ENCODE measurements at regions of chr6 and their contacts with region 1.

Region 1: DNA sequence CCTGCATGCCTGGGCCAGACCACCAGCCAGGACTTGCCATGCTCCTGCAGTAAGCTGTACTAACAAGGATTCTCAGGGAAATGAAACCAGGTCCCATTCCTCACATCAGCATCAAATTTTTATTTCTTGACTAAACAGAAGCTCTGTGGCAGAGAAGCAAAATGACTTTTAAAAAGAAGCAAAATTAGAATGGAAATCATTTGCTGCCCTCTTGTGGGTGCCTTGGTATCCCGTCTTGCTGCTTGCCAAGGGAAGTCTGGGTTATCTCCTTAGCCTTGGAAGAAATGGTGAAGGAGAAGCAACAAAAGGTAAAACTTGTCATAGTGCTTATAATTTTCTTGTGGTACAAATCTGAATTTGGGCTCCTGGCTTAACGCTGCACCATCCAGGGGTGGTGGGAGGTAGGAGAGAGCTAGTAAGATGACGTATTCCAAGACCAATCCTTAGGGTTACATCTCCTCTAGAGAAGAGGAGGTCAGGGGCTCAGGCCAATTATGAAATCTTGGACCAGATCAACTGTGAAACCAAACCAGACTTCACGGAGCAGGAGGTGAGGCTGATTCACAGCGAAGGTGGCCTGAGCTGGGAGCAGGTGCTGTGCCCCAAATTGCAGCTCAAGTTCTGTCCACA is 107.5 kb downstream of the FAXC start:
- DNase-seq: no peak
- ATAC-seq: no peak
- H3K4me3 ChIP-seq: no peak overlapping the region
- H3K27ac ChIP-seq: no peak overlapping the region
- H3K4me1 ChIP-seq: no peaks in the 10 kb centered on the region
- H3K27me3 ChIP-seq: peaks cover 0 to 5% (median 0%) of the 10 kb centered on the region in 9 donors
- CTCF ChIP-seq: peak in 10 of 12 donors; percentile 22 to 52 (median 42)
- POLR2A ChIP-seq: no peak

Region 2: DNA sequence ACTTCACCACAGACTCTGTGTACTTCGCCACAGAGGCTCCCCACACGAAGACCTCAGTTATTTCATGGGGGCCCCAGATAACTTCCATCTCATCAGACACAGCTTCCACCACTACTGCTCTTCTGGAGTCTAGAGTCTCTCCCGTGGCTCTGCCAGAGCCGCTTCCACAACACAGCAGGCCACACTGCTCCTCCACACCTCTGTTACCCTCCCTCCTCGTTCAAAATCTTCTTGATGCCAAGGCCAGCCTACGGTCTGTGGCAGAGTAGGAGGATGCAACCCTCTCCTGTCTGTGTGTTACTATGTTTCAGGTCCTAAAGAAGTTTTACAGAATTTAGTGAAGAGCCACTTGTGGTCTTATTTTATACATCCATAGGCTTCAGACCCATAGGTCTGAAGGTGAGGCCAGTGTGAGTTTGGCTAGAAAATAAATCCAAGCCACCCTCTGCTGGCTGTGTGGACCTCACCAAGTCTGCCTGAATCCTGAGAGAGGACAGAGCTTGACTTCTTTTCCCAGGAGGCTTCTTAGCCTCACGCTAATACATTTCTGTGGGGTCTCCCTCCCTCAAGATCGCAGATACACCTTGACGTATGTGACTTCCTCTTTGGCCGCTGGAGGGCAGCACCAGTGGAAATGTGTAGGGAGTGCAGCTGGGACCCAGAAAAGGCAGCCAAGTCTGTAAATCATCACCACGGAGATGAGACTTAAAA is 90.2 kb before region 1 on chr6:
- intact Hi-C with region 1: loop called in 8 of 10 experiments (anchors 1 to 5 kb)
- DNase-seq: peak in 2 of 5 donors; percentile 13 to 44
- ATAC-seq: peak in 2 of 4 donors; percentile 59 to 61
- H3K4me3 ChIP-seq: no peak overlapping the region
- H3K27ac ChIP-seq: no peak overlapping the region
- H3K4me1 ChIP-seq: no peaks in the 10 kb centered on the region
- H3K27me3 ChIP-seq: peaks cover 0 to 5% (median 0%) of the 10 kb centered on the region in 9 donors
- CTCF ChIP-seq: peak; percentile 19 to 58 (median 39)
- POLR2A ChIP-seq: no peak